BJ (cell line): ENCODE measurements at regions of chr5 and their contacts with region 1.

Region 1: DNA sequence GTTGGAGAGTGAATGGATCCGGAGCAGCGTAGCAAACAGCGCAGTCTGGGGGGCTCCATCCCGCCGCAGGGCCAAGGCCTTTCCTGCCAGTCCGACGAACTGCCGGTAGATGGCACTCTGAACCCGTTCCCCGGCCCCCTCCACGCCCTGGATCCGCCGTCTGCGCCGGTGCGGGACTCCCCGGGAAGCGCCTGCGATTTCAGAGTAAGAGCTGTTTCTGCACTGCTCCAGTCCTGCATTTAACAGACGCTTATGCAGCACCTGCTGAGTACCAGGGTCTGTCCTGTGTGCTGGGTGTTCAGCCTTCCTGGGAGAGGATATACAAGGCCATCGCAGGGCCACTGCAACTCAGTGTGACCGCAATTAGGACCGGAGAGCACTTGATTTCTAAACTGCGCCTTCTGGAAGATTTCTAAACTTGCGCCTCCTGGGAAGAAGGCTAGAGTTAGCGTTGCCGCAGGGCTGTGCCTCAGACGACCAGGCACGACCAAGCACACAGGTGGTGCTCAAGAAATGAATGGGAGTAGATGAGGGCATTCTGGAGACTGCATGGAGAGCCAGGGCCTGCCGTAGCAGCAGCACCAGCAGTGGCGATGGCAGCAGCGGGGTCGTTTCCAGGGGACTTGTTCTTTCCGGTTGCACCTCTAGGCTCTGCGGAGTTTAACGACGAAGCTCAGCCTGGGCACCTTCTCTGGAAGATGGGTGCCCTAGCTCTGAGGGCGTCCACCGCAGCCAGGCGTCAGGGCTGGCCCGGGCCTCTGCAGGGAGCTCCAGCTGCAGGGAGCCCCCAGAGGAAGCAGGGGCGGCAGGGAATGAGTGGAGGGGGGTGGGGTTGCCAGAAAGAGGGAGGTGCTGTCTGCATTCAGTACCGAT is 14.3 kb upstream of the TIFAB start:
- DNase-seq: no peak
- H3K4me3 ChIP-seq: no peak overlapping the region
- H3K27me3 ChIP-seq: peaks cover 5% of the 10 kb centered on the region
- CTCF ChIP-seq: peak; percentile 95

Region 2: GRCh38 chr5:135476615-135477582 is 10.5 kb after region 1 on chr5:
- CTCF ChIA-PET with region 1: interaction called, 74 read pairs
- POLR2A ChIA-PET with region 1: no interaction called
- DNase-seq: no peak
- H3K4me3 ChIP-seq: no peak overlapping the region
- H3K27me3 ChIP-seq: peaks cover 6% of the 10 kb centered on the region
- CTCF ChIP-seq: no peak

Region 3: GRCh38 chr5:135488727-135489465 is 22.5 kb after region 1 on chr5:
- CTCF ChIA-PET with region 1: interaction called, 27 read pairs
- POLR2A ChIA-PET with region 1: no interaction called
- DNase-seq: peak; percentile 10
- H3K4me3 ChIP-seq: peak overlapping the region; percentile 32
- H3K27me3 ChIP-seq: no peaks in the 10 kb centered on the region
- CTCF ChIP-seq: no peak

Region 4: DNA sequence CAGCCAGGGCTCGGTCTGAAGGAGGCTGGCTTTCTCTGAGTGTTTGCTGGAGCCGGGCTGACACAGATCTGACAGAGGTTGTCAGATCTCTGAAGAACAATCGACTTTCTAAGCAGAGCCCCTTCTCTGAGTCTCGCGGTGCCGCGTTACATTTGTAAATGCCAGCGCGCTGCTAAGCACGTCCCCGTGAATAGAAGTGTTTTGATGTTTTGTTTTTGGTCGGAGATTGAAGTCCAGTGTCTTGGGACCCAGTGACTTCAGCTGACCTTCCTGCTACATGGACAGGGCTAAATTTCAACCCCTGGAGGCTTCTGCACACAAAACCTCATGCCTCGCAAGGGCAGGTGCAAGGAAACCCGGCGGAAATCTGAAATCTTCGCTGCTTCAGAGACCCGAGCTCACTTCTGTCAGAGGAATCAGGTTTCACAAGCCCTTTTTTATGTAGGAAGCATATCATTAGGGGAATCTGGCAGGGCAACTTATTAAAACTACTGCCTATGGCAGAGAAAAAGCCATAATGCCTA is 42.1 kb after region 1 on chr5:
- CTCF ChIA-PET with region 1: interaction called, 11 read pairs
- POLR2A ChIA-PET with region 1: no interaction called
- DNase-seq: no peak
- H3K4me3 ChIP-seq: no peak overlapping the region
- H3K27me3 ChIP-seq: peaks cover 18% of the 10 kb centered on the region
- CTCF ChIP-seq: no peak

Region 5: DNA sequence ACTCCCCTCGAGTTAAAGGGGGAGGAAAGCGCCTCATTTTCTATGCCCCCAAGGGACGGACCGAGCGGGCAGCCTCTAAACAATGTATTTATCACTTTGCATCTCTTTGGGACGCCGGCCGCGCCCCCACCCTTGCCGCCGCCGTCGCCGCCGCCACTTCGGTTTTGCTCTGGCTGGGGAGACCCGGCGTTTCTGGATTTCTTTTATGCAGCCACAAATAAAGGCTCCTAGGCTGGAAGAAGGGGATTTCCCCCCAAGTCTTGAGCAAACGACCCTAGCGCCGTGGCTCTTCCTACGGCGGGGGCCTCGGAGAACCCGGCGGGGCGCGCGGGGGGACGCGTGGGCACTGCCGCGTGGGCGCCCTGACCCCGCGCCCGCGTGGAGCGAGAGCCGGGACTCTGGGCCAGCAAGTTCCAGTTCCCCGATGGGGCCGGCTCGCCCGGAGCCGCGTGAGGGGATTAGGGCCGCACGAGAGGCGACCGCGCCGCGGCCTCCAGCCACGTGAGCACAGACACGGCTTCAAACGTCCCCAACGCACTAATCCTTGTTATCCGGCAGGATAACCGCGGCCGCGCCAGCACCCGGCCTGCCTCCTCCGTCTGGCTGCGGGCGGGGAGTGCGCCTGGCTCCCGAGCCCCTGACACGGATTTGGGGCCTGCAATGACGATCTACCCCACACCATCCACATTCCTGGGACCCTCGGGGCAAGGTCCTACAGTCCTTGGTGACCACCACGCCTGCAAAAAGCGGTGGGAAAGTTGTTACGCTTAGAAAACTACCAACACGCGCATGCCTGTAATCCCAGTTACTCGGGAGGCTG is 77.3 kb after region 1 on chr5:
- CTCF ChIA-PET with region 1: interaction called, 1,147 read pairs
- POLR2A ChIA-PET with region 1: no interaction called
- DNase-seq: no peak
- H3K4me3 ChIP-seq: peak overlapping the region; percentile 25
- H3K27me3 ChIP-seq: peaks cover 59% of the 10 kb centered on the region
- CTCF ChIP-seq: no peak

Region 6: GRCh38 chr5:135560858-135561257 is 94.4 kb after region 1 on chr5:
- CTCF ChIA-PET with region 1: interaction called, 1,147 read pairs
- POLR2A ChIA-PET with region 1: no interaction called
- DNase-seq: no peak
- H3K4me3 ChIP-seq: no peak overlapping the region
- H3K27me3 ChIP-seq: peaks cover 7% of the 10 kb centered on the region; the same call in 1 of the 2 replicates
- CTCF ChIP-seq: peak; percentile 92

Region 7: DNA sequence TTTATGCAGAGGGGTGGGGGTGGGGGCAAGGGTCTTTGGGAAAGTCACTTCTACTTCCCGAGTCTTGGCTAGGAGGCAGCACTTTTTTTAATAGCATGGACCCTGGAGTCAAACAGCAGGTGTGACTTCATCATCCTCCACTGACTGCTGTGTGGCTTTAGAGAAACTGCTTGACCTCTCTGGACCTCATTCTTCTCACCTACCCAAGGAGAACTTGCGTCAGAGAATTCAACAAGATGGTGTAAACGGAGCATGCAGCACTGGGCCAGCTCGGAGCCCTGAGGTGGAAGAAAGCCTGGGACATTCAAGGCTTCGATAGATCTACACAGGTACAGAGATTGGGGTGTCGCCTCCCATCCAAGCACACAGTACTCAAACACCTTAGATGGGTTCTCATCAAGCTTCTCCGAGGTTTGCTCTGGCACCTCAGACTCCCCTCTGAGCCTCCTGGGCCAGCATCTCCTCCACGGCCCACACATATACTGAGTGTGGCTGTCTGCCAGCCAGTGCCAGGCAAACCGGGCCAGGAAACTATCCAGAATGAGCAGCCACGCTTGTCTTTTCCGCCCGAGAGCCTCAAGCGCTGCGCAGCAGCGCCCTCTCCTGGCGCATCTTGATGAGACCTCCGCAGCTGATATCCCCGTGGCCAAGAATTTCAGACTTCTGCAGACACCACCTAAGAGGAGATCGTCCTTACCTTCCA is 363.4 kb after region 1 on chr5:
- CTCF ChIA-PET with region 1: interaction called, 20 read pairs
- POLR2A ChIA-PET with region 1: no interaction called
- DNase-seq: no peak
- H3K4me3 ChIP-seq: no peak overlapping the region
- H3K27me3 ChIP-seq: peaks cover 14% of the 10 kb centered on the region
- CTCF ChIP-seq: peak; percentile 82